Right cardiac atrium (tissue), 5 donors: ENCODE measurements at regions of chr5 and their contacts with region 1.

Region 1: DNA sequence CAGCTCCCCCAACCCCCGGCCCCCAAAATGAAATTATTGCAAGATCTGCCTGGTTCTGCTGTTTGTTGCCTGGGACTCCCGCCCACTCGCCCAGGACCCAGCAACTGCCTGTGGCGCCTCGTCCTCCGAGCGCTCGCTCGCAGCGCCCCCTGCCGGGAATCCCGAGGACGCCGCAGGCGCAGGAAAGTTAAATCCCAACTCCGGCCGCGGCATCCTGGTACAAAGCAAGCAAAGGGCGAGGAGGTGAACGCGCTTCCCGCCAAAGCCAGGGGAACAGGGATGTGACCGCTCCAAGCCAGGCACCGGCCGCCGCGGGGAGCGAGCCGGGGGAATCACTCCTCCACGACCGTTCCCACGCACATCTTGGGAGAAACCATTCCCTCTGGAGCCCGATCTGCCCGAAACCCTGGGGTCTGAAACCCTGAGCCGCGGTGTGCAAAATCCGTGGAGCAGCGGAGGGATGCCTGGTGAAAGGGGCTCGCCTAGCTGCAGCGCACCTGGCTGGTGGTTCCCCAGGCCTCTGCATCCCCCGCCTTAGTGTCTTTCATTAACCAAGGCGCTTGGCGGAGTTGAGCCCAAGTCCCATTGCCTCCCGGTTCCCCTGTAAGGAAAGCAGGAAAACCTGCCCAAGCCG is 1.3 kb downstream of the SEMA5A start:
- DNase-seq: peak; percentile 82 to 94 (median 92)
- ATAC-seq: peak; percentile 82 to 87
- H3K4me3 ChIP-seq: peak overlapping the region; percentile 81
- H3K27ac ChIP-seq: peak overlapping the region; percentile 75
- H3K4me1 ChIP-seq: no peaks in the 10 kb centered on the region
- H3K27me3 ChIP-seq: no peaks in the 10 kb centered on the region

Region 2: GRCh38 chr5:9284781-9285307 is 259.8 kb before region 1 on chr5:
- intact Hi-C with region 1: loop called in 1 of 4 experiments (anchors 10 kb)
- DNase-seq: peak in 2 of 3 donors; percentile 18 to 61
- ATAC-seq: peak; percentile 83 to 91
- H3K4me3 ChIP-seq: no peak overlapping the region
- H3K27ac ChIP-seq: peak overlapping the region; percentile 77
- H3K4me1 ChIP-seq: peaks cover 2% of the 10 kb centered on the region
- H3K27me3 ChIP-seq: no peaks in the 10 kb centered on the region

Region 3: GRCh38 chr5:9361835-9362234 is 182.8 kb before region 1 on chr5:
- intact Hi-C with region 1: loop called in 3 of 4 experiments (anchors 5 to 10 kb)
- DNase-seq: peak; percentile 21 to 57 (median 49)
- ATAC-seq: peak; percentile 28 to 59
- H3K4me3 ChIP-seq: no peak overlapping the region
- H3K27ac ChIP-seq: no peak overlapping the region
- H3K4me1 ChIP-seq: peaks cover 2% of the 10 kb centered on the region
- H3K27me3 ChIP-seq: no peaks in the 10 kb centered on the region

Region 4: GRCh38 chr5:9456435-9457042 is 88.1 kb before region 1 on chr5:
- intact Hi-C with region 1: no loop called
- DNase-seq: no peak
- ATAC-seq: no peak
- H3K4me3 ChIP-seq: no peak overlapping the region
- H3K27ac ChIP-seq: no peak overlapping the region
- H3K4me1 ChIP-seq: peaks cover 2% of the 10 kb centered on the region
- H3K27me3 ChIP-seq: no peaks in the 10 kb centered on the region